ENCODE measurements at regions of chr15 and their contacts with region 1.

Region 1: DNA sequence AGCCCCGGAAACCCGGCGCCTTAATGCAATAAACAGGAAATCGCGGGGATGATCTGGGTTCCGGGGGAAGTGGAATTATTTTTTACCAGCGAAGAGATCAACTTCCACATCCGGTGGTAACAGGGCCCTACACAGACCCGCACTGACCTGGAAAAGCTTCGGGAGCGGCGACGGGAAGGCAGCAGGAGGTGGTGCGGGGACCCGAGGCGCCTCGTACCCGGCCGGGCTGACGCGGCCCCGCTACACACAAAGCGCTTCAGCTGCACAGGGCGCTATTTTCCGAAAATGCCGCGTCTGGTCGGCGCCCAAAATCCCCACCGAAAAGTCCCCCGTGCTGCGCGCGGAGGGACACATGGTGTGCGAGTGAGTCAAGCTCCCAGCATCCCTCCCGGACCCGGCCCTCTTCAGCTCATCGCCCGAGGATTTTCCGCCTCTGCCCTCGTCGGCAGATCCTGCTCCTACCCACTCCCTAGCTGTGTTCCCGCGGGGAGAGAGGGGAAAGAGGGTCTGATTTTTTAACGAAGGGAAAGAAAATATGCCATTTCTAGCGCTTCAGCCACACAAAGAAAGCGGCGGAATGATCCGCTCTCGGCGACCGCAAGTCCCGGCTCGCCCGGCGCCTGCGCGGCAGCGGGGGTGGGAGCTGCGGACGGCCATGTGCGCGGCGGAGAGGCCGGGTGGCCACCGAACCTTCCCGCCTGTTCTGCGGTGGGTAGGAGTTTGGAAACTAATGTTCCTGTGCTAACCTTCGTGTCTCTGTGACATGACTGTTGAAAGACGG is at the start of gene GABPB1:
- DNase-seq: peak; percentile 71 to 95 (median 84)
- ATAC-seq: peak; percentile 44
- H3K4me3 ChIP-seq: peak within 1 kb of the TSS; percentile 97
- H3K4me3 Mint-ChIP-seq: peak within 1 kb of the TSS; percentile 97
- H3K27ac ChIP-seq: peak within 1 kb of the TSS; percentile 99 to 100
- H3K27ac Mint-ChIP-seq: peak within 1 kb of the TSS; percentile 100
- H3K4me1 ChIP-seq: peaks cover 37% of the 10 kb centered on the region
- H3K4me1 Mint-ChIP-seq: peaks cover 73% of the 10 kb centered on the region
- H3K27me3 ChIP-seq: no peaks in the 10 kb centered on the region
- H3K27me3 Mint-ChIP-seq: peaks cover 19% of the 10 kb centered on the region
- CTCF ChIP-seq: no peak
- total RNA-seq, gene GABPB1: 25.7 to 27.1 TPM

Region 2: GRCh38 chr15:48877630-48878595 is 1477.1 kb before region 1 on chr15 and contains the start of gene EID1:
- CTCF ChIA-PET with region 1: no interaction called
- POLR2A ChIA-PET with region 1: interaction called, 29 read pairs
- intact Hi-C with region 1: no loop called
- DNase-seq: peak; percentile 84 to 98 (median 90)
- ATAC-seq: peak; percentile 93
- H3K4me3 ChIP-seq: peak within 1 kb of the TSS; percentile 92
- H3K4me3 Mint-ChIP-seq: peak within 1 kb of the TSS; percentile 94
- H3K27ac ChIP-seq: peak within 1 kb of the TSS; percentile 68 to 78
- H3K27ac Mint-ChIP-seq: peak within 1 kb of the TSS; percentile 95
- H3K4me1 ChIP-seq: peaks cover 7% of the 10 kb centered on the region
- H3K4me1 Mint-ChIP-seq: peaks cover 23% of the 10 kb centered on the region
- H3K27me3 ChIP-seq: no peaks in the 10 kb centered on the region
- H3K27me3 Mint-ChIP-seq: peaks cover 25% of the 10 kb centered on the region
- CTCF ChIP-seq: no peak
- total RNA-seq, gene EID1: 41.0 to 45.3 TPM

Region 3: DNA sequence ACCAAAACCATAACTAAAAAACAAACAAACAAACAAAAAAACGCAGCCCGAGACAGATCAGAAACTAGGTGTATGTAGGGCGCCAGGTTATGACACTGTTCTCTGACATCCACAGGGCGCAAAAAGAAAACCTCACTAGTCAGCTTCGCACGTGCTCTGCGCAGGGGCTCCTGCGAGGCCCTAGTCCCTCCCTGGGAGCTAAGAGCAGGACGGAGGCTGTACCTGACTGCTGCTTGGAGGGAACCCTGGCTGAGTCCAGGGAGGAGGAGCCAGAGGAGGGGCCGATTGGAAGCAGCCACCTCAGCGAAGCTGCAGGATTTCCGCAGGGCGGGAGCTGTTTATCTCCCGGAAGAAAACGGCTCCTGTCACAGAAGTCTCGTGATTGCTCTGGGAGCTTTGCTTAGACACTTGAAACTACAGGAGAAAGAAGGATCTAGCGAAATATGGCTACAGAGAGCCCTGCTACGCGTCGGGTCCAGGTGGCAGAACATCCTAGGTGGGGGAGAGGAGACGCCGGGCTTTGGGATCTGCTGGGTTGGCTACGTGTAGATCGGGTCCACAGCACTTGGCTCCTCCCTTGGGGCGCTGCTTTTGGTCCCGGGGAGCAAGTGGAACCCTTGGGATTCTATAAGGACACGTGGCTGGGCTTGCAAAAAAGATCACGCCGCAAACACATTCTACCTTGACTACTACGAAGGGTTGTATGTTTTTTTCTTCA is 1185.0 kb before region 1 on chr15 and contains the start of gene GALK2:
- CTCF ChIA-PET with region 1: no interaction called
- POLR2A ChIA-PET with region 1: interaction called, 5 read pairs
- intact Hi-C with region 1: loop called in 1 of 2 experiments (anchors 10 kb)
- DNase-seq: peak; percentile 48 to 94 (median 73)
- ATAC-seq: peak; percentile 98
- H3K4me3 ChIP-seq: peak within 1 kb of the TSS; percentile 76
- H3K4me3 Mint-ChIP-seq: peak within 1 kb of the TSS; percentile 92
- H3K27ac ChIP-seq: peak within 1 kb of the TSS; percentile 77 to 88
- H3K27ac Mint-ChIP-seq: peak within 1 kb of the TSS; percentile 93
- H3K4me1 ChIP-seq: peaks cover 18% of the 10 kb centered on the region
- H3K4me1 Mint-ChIP-seq: peaks cover 52% of the 10 kb centered on the region
- H3K27me3 ChIP-seq: no peaks in the 10 kb centered on the region
- H3K27me3 Mint-ChIP-seq: no peaks in the 10 kb centered on the region
- CTCF ChIP-seq: no peak
- total RNA-seq, gene GALK2: 11.5 to 11.9 TPM

Region 4: GRCh38 chr15:50277370-50277769 is 77.7 kb before region 1 on chr15:
- CTCF ChIA-PET with region 1: no interaction called
- POLR2A ChIA-PET with region 1: no interaction called
- intact Hi-C with region 1: no loop called
- DNase-seq: no peak
- ATAC-seq: no peak
- H3K4me3 ChIP-seq: no peak overlapping the region
- H3K4me3 Mint-ChIP-seq: no peak overlapping the region
- H3K27ac ChIP-seq: no peak overlapping the region
- H3K27ac Mint-ChIP-seq: no peak overlapping the region
- H3K4me1 ChIP-seq: no peaks in the 10 kb centered on the region
- H3K4me1 Mint-ChIP-seq: no peaks in the 10 kb centered on the region
- H3K27me3 ChIP-seq: no peaks in the 10 kb centered on the region
- H3K27me3 Mint-ChIP-seq: no peaks in the 10 kb centered on the region
- CTCF ChIP-seq: no peak

Region 5: DNA sequence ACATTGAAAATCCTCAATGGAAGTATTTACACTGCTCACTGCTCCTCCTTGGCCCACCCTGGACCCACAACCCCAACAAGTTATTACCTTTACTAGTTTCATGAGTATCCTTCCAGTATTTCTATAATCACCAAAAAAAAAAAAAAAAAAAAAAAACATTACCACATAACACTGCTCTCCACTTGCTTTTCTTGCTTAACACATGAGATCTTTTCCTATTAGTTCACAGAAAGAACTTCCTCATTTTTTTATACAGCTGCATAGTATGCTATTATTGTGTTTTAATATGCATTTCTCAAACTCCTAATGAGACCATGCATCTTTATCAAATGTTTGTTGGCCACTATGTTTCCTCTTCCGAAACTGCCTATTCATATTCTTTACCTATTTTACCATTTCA is 14.6 kb before region 1 on chr15:
- CTCF ChIA-PET with region 1: no interaction called
- POLR2A ChIA-PET with region 1: interaction called, 24 read pairs
- intact Hi-C with region 1: no loop called
- DNase-seq: no peak
- ATAC-seq: no peak
- H3K4me3 ChIP-seq: no peak overlapping the region
- H3K4me3 Mint-ChIP-seq: no peak overlapping the region
- H3K27ac ChIP-seq: no peak overlapping the region
- H3K27ac Mint-ChIP-seq: no peak overlapping the region
- H3K4me1 ChIP-seq: peaks cover 4% of the 10 kb centered on the region
- H3K4me1 Mint-ChIP-seq: peaks cover 30% of the 10 kb centered on the region
- H3K27me3 ChIP-seq: no peaks in the 10 kb centered on the region
- H3K27me3 Mint-ChIP-seq: no peaks in the 10 kb centered on the region
- CTCF ChIP-seq: no peak

Region 6: GRCh38 chr15:50765195-50765973 is 410.4 kb after region 1 on chr15 and contains the start of gene SPPL2A:
- CTCF ChIA-PET with region 1: no interaction called
- POLR2A ChIA-PET with region 1: no interaction called
- intact Hi-C with region 1: loop called in 1 of 2 experiments (anchors 5 kb)
- DNase-seq: peak; percentile 47 to 88 (median 69)
- ATAC-seq: peak; percentile 89
- H3K4me3 ChIP-seq: peak within 1 kb of the TSS; percentile 72
- H3K4me3 Mint-ChIP-seq: peak within 1 kb of the TSS; percentile 94
- H3K27ac ChIP-seq: peak within 1 kb of the TSS; percentile 82 to 88
- H3K27ac Mint-ChIP-seq: peak within 1 kb of the TSS; percentile 84
- H3K4me1 ChIP-seq: peaks cover 25% of the 10 kb centered on the region
- H3K4me1 Mint-ChIP-seq: peaks cover 44% of the 10 kb centered on the region
- H3K27me3 ChIP-seq: no peaks in the 10 kb centered on the region
- H3K27me3 Mint-ChIP-seq: no peaks in the 10 kb centered on the region
- CTCF ChIP-seq: no peak
- total RNA-seq, gene SPPL2A: 26.6 to 30.7 TPM

Measured in CD4-positive, alpha-beta T cell (primary cell).